AG04450 (cell line): ENCODE measurements at regions of chr10 and their contacts with region 1.

Region 1: DNA sequence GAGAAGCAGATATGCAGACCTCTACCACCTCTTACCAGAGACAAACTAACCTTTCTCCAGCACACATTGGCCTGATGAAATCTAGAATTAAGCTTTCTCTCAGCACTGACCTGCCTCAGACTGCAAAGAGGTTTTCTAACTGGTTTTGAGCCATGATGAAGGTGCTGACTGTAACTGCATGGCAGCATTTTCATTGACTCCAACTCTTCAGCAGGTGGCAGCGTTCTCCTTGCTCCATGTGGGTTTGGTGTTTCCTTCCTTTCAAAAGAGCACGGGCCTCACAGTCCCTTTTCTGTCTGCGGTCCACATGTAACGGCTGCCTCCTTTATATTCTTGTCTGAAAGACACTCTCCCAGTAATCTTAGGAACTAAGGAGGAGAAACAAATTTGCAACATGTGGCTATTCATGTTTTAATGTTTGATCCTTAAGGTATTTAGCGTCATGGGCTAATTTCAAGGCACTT is 12.6 kb downstream of the KLLN start:
- DNase-seq: no peak
- H3K4me3 ChIP-seq: no peak overlapping the region
- H3K27ac ChIP-seq: no peak overlapping the region
- H3K27me3 ChIP-seq: no peaks in the 10 kb centered on the region
- CTCF ChIP-seq: peak; percentile 71

Region 2: DNA sequence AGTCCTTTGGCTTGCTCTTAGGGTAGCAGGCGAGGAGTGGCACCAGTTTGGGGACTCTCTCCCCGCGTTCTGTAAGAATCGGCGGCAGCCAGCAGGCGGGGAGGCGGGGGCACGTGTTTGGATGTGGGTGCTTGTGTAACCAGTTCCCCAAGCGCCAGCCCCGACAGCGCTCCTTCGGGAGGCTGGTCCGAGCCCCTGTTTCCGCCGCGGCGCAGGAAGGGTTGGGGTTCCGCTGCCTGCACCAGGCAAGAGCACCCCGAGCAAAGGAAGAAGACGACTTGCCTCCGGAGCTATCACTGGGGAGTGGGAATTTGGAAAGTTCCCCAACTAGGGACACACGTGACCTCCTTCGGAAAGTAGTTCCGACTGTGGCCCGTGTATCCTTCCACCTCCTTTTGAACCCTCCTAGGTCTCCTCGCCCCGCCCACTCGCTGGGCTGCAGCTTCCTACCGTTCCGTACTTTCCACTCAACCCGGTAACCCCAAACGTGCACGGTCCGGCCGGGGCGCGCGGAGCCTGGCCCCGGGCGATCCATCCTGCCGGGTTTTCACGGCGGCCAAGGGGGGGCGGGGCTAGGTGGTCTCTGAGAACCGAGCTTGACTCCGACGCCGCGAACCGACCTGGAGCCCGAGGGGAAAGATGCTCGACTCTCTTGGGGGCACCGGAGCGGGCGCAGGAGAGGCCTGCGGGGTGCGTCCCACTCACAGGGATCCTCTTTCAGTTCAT is 11.3 kb after region 1 on chr10:
- CTCF ChIA-PET with region 1: interaction called, 8 read pairs
- POLR2A ChIA-PET with region 1: interaction called, 12 read pairs
- DNase-seq: peak; percentile 97
- H3K4me3 ChIP-seq: peak overlapping the region; percentile 91
- H3K27ac ChIP-seq: peak overlapping the region; percentile 84
- H3K27me3 ChIP-seq: no peaks in the 10 kb centered on the region
- CTCF ChIP-seq: 0 out of 2 replicates have a peak, but pooled peaks have one; percentile 4